Heart left ventricle (tissue), 16 donors: ENCODE measurements at regions of chr4 and their contacts with region 1.

Region 1: GRCh38 chr4:142846729-142847596 is 862 bp upstream of the INPP4B start:
- DNase-seq: peak; percentile 41 to 68 (median 48)
- ATAC-seq: peak; percentile 75 to 84 (median 78)
- H3K4me3 ChIP-seq: peak overlapping the region; percentile 57 to 85 (median 72)
- H3K27ac ChIP-seq: peak overlapping the region; percentile 73 to 96 (median 86)
- H3K4me1 ChIP-seq: peaks cover 0 to 27% (median 2%) of the 10 kb centered on the region in 12 donors
- H3K27me3 ChIP-seq: peaks cover 0 to 46% (median 2%) of the 10 kb centered on the region in 9 donors
- CTCF ChIP-seq: peak in 8 of 12 donors; percentile 29 to 55 (median 40)
- POLR2A ChIP-seq: no peak

Region 2: DNA sequence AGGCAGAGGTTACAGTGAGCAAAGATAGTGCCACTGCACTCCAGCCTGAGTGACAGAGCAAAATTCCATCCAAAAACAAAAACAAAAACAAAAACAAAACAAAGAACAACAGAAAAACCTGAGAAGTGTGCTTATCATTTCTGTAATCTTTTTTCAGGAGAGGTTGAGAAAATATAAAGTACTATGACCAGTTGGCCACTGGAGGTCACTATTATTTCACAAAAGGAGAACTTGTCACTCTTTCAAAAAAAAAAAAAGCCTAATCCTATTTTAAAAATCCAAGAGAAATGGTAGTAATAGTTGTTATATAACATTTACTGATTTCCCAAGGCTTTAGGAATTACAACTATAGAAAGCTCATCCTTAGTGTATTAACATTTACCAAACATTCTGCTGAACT is 1688.7 kb before region 1 on chr4:
- intact Hi-C with region 1: loop called in 2 of 10 experiments (anchors 10 kb)
- DNase-seq: no peak
- ATAC-seq: no peak
- H3K4me3 ChIP-seq: no peak overlapping the region
- H3K27ac ChIP-seq: no peak overlapping the region
- H3K4me1 ChIP-seq: peaks cover 0 to 17% (median 2%) of the 10 kb centered on the region in 12 donors
- H3K27me3 ChIP-seq: no peaks in the 10 kb centered on the region
- CTCF ChIP-seq: peak; percentile 36 to 66 (median 56)
- POLR2A ChIP-seq: no peak

Region 3: DNA sequence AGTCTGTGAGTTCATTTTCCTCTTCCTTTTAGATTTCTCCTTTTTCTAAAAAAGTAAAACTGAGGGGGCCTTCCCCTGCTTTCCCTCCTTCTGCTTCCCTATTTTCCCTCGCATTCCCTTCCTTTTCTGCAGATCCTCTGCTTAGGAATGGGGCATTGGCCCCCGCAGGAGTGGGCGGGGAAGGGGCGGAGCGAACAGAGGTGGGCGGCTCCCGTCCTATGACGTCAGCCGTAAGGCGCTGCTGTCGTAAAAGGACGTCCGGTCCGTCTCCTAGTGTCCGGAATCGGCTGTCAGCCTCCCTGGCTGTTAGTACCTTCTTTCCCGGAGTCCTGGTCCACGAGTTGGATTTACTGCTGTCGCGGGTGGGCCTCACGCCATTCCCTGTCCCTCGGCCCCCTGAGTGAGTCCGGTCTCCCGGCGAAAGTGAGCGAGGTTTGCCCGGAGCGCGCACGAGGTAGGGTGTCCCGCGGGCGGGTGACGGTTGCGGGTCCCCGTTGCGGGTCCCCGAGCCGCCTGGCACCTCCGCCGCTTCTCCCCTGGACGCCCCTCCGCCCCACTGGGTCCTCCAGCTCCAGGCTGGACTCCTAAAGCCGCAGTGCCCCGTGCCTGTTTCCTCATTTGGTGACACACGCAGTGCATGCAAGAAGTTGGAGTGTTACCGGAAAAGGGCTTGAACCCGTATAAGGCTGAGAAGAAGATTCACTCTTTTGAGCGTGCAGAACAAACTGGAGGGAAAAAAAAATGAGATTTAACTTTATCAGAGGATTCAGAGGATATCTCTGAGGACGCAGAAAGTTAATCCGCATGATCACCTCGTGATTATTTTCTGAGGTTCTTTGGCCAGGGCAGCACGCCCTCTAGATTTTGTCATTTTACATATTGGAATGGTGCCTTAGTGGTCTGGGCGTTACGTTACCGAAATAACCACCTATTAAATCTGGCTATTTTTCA is 1626.0 kb before region 1 on chr4 and contains the start of gene ZNF330:
- intact Hi-C with region 1: loop called in 1 of 10 experiments (anchors 5 kb)
- DNase-seq: peak; percentile 92 to 96 (median 94)
- ATAC-seq: peak; percentile 94 to 97 (median 96)
- H3K4me3 ChIP-seq: peak within 1 kb of the TSS; percentile 66 to 98 (median 83)
- H3K27ac ChIP-seq: peak within 1 kb of the TSS; percentile 89 to 99 (median 94)
- H3K4me1 ChIP-seq: peaks cover 0 to 53% (median 18%) of the 10 kb centered on the region in 12 donors
- H3K27me3 ChIP-seq: no peaks in the 10 kb centered on the region
- CTCF ChIP-seq: peak in 6 of 12 donors; percentile 12 to 43 (median 29)
- POLR2A ChIP-seq: peak; percentile 58 to 93
- total RNA-seq, gene ZNF330: 54.4 to 183 (median 141) TPM

Region 4: DNA sequence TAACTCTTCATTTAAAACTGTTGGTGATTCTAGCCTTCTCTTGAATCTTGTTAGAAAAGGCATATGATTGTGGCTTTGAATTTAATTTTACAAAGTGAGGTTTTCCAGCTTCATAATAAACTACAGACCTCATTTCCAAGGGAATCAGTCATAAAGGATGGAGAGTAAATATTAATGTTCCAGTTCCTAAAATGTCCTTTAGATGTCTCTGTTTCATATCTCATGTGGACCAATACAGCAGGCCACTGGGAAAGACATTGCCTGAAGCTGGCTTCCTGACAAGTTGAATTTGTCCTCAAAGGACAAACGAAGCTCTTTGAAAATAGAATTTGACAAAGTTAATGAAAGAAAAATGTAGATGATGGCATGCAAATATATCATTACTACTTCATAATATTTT is 1500.8 kb before region 1 on chr4:
- intact Hi-C with region 1: loop called in 1 of 10 experiments (anchors 10 kb)
- DNase-seq: peak in 3 of 5 donors; percentile 19 to 36 (median 34)
- ATAC-seq: peak in 3 of 4 donors; percentile 75 to 83 (median 79)
- H3K4me3 ChIP-seq: no peak overlapping the region
- H3K27ac ChIP-seq: no peak overlapping the region
- H3K4me1 ChIP-seq: peaks cover 0 to 29% (median 0%) of the 10 kb centered on the region in 12 donors
- H3K27me3 ChIP-seq: no peaks in the 10 kb centered on the region
- CTCF ChIP-seq: peak; percentile 43 to 73 (median 53)
- POLR2A ChIP-seq: no peak

Region 5: DNA sequence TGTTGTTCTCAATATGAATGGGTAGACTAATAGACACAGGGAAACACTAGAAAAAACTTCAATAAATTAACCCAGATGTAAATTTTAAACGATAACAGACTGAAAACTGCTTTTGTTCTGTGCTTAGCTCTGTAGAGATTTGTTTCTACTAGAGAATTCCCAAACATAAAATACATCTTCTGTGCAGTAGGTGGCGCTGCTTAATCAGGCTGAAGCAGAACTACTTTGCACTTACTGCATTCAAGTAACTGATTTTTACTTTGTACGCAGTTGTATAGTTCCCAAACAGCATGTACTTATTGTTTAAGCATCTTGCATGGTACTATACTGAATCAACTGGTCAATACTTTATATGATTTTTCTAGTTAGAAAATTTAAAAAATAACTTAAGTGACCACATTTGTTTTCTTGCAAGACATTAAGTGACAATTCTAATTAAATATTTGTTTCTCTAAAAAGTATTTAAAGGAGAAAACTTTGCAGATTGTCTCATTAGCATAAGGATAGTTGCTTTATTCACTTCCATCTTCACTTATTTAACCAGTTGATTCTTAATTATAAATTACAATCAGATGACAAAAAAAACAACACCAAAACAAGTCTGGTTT is 720.0 kb before region 1 on chr4:
- intact Hi-C with region 1: loop called in 9 of 10 experiments (anchors 2 to 10 kb)
- DNase-seq: peak in 4 of 5 donors; percentile 25 to 57 (median 42)
- ATAC-seq: peak in 3 of 4 donors; percentile 37 to 64 (median 62)
- H3K4me3 ChIP-seq: no peak overlapping the region
- H3K27ac ChIP-seq: no peak overlapping the region
- H3K4me1 ChIP-seq: peaks cover 0 to 42% (median 14%) of the 10 kb centered on the region in 12 donors
- H3K27me3 ChIP-seq: no peaks in the 10 kb centered on the region
- CTCF ChIP-seq: peak; percentile 67 to 97 (median 84)
- POLR2A ChIP-seq: no peak

Region 6: GRCh38 chr4:142282870-142283431 is 564.0 kb before region 1 on chr4:
- intact Hi-C with region 1: loop called in 1 of 10 experiments (anchors 10 kb)
- DNase-seq: no peak
- ATAC-seq: no peak
- H3K4me3 ChIP-seq: no peak overlapping the region
- H3K27ac ChIP-seq: no peak overlapping the region
- H3K4me1 ChIP-seq: peaks cover 0 to 5% (median 0%) of the 10 kb centered on the region in 12 donors
- H3K27me3 ChIP-seq: no peaks in the 10 kb centered on the region
- CTCF ChIP-seq: peak; percentile 39 to 60 (median 48)
- POLR2A ChIP-seq: no peak

Region 7: DNA sequence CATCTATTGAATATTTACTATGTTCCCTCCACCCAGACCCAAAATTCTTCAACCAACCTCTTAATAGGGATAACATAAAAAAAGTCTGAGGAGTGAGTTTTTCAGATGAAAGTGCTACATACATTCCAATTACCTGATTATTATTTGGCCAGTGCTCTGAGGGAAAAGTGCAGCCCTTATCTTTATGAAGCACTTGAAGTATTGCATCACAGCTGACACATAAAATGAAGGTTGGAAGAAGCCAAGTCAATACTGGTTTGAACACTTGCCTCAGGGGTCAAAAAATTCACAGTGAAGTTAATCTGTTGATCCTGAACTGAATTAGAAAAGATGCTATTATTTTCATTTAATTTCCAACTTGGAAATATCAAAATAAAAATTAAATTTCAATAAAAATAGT is 499.7 kb before region 1 on chr4:
- intact Hi-C with region 1: loop called in 9 of 10 experiments (anchors 5 to 10 kb)
- DNase-seq: no peak
- ATAC-seq: peak in 3 of 4 donors; percentile 68 to 82 (median 81)
- H3K4me3 ChIP-seq: no peak overlapping the region
- H3K27ac ChIP-seq: peak overlapping the region in 4 of 12 donors; percentile 27 to 70 (median 46)
- H3K4me1 ChIP-seq: peaks cover 0 to 64% (median 35%) of the 10 kb centered on the region in 12 donors
- H3K27me3 ChIP-seq: no peaks in the 10 kb centered on the region
- CTCF ChIP-seq: no peak
- POLR2A ChIP-seq: no peak

Region 8: GRCh38 chr4:142940425-142941330 is 93.7 kb after region 1 on chr4:
- intact Hi-C with region 1: no loop called
- DNase-seq: peak in 1 of 5 donors; percentile 41
- ATAC-seq: peak in 2 of 4 donors; percentile 66 to 86
- H3K4me3 ChIP-seq: no peak overlapping the region
- H3K27ac ChIP-seq: no peak overlapping the region
- H3K4me1 ChIP-seq: no peaks in the 10 kb centered on the region
- H3K27me3 ChIP-seq: no peaks in the 10 kb centered on the region
- CTCF ChIP-seq: no peak
- POLR2A ChIP-seq: no peak